ENCODE measurements at regions of chr7 and their contacts with region 1.

Region 1: DNA sequence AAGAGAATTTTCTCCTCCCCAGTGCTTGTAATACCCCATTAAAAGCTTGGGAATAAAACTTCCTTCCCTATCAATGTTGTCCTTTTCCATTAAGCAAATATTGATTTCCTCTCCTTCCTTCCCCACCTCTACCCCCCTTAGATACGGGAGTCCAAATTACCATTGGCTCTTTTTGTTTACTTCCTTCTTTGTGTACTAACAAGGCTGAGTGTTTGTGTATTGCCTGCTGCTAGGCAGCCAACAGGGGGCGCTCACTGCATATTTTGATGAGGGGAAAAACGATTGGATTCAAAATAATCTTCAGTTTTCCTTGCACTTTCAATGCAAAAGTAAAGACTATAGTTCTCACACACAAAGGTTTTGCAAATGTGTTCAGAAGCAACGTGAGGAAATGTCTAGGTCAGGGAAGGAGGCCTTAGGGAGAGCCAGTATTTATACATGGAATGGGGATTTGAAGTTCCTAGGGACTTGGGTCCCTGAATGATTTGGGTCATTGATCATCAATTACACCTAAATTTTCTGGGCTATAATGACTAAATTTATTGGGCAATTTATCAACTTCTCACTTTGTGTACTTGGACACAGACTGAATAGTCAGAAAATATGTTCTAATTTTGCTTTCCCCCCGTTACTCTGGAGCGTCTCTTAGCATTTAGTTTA is 23.6 kb upstream of the VPS41 start:
- DNase-seq: peak; percentile 78 to 93
- ATAC-seq: peak; percentile 44
- H3K4me3 ChIP-seq: no peak overlapping the region
- H3K27ac ChIP-seq: no peak overlapping the region
- H3K4me1 ChIP-seq: peaks cover 0 to 2% of the 10 kb centered on the region in 2 donors
- H3K27me3 ChIP-seq: no peaks in the 10 kb centered on the region

Region 2: GRCh38 chr7:39517240-39517639 is 584.6 kb after region 1 on chr7:
- intact Hi-C with region 1: loop called (anchors 5 kb)
- DNase-seq: no peak
- ATAC-seq: no peak
- H3K4me3 ChIP-seq: no peak overlapping the region
- H3K27ac ChIP-seq: no peak overlapping the region
- H3K4me1 ChIP-seq: no peaks in the 10 kb centered on the region
- H3K27me3 ChIP-seq: no peaks in the 10 kb centered on the region

Region 3: GRCh38 chr7:39527296-39527695 is 594.7 kb after region 1 on chr7:
- intact Hi-C with region 1: loop called in 1 of 2 experiments (anchors 5 kb)
- DNase-seq: no peak
- ATAC-seq: no peak
- H3K4me3 ChIP-seq: no peak overlapping the region
- H3K27ac ChIP-seq: no peak overlapping the region
- H3K4me1 ChIP-seq: no peaks in the 10 kb centered on the region
- H3K27me3 ChIP-seq: no peaks in the 10 kb centered on the region

Measured in aorta (tissue), 5 donors.